ENCODE measurements at regions of chr2 and their contacts with region 1.

Region 1: GRCh38 chr2:12716282-12717190 is at the start of gene TRIB2:
- DNase-seq: peak; percentile 91
- H3K4me3 Mint-ChIP-seq: peak within 1 kb of the TSS; percentile 89
- H3K27ac Mint-ChIP-seq: peak within 1 kb of the TSS; percentile 92
- H3K4me1 Mint-ChIP-seq: peaks cover 46% of the 10 kb centered on the region
- H3K27me3 Mint-ChIP-seq: peaks cover 6% of the 10 kb centered on the region
- total RNA-seq, gene TRIB2: 62.8 to 68.3 TPM

Region 2: DNA sequence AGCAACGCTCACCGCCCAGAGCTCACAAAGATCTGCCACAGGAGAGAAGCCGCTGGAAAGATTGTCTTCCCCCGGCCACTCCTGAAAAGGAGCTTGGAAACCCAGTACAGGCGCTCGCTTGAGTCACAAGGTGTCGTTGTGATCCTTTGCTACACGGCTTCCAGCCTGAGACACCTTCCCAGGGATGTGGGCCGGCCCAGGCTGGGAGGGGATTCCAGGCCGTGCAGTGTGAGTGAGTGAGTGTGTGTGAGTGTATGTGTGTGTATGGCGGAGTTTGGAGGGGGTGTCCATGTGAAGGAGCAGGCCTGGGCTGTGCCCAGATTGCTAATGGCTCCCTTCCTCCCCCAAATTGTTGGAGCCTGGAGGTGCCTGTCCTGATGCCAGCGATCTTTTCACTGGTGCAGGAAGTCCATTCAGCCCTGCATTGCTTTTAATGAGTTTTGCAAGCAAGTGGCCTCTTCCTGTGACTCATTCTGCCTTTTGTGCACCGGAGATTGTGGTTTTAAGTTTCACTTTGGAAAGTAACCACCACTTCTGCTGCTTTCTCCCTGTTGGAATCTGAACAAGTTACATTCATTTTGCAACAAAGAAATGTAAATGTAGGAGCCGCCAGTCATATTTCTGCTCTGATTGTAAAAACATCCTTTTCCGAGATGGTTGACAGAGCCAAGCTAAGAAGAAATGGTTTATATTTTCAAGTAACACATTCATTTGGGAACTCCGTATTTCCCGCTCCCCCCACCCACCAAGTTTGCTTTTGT is 886.4 kb before region 1 on chr2:
- CTCF ChIA-PET with region 1: interaction called, 18 read pairs
- POLR2A ChIA-PET with region 1: interaction called, 7 read pairs
- DNase-seq: peak; percentile 64
- H3K4me3 Mint-ChIP-seq: peak overlapping the region; percentile 52
- H3K27ac Mint-ChIP-seq: peak overlapping the region; percentile 13
- H3K4me1 Mint-ChIP-seq: peaks cover 29% of the 10 kb centered on the region
- H3K27me3 Mint-ChIP-seq: peaks cover 51% of the 10 kb centered on the region

Region 3: DNA sequence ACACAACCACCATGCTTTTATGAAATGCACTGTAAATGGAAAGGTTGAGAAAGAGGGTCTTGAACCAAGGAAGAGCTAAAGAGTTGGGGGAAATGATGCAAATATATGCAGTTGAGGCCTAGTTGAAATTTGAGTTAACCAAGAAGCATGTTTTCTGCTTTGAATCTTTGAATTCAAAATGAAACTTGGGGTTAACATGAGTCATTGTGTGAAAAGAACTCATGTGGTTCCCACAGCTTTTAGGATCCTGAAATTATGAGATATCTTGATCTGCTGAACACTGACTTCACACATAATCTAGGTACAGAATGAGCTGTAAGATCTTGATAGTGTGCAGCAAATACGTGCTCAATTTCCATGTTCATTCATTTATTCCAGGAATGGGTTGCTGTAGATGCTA is 422.7 kb before region 1 on chr2:
- CTCF ChIA-PET with region 1: interaction called, 6 read pairs
- POLR2A ChIA-PET with region 1: interaction called, 14 read pairs
- DNase-seq: no peak
- H3K4me3 Mint-ChIP-seq: no peak overlapping the region
- H3K27ac Mint-ChIP-seq: peak overlapping the region; percentile 79
- H3K4me1 Mint-ChIP-seq: peaks cover 55% of the 10 kb centered on the region
- H3K27me3 Mint-ChIP-seq: peaks cover 15% of the 10 kb centered on the region

Region 4: GRCh38 chr2:12436935-12437561 is 279.5 kb before region 1 on chr2:
- CTCF ChIA-PET with region 1: interaction called, 29 read pairs
- POLR2A ChIA-PET with region 1: interaction called, 19 read pairs
- DNase-seq: no peak
- H3K4me3 Mint-ChIP-seq: no peak overlapping the region
- H3K27ac Mint-ChIP-seq: no peak overlapping the region
- H3K4me1 Mint-ChIP-seq: peaks cover 30% of the 10 kb centered on the region
- H3K27me3 Mint-ChIP-seq: no peaks in the 10 kb centered on the region

Region 5: DNA sequence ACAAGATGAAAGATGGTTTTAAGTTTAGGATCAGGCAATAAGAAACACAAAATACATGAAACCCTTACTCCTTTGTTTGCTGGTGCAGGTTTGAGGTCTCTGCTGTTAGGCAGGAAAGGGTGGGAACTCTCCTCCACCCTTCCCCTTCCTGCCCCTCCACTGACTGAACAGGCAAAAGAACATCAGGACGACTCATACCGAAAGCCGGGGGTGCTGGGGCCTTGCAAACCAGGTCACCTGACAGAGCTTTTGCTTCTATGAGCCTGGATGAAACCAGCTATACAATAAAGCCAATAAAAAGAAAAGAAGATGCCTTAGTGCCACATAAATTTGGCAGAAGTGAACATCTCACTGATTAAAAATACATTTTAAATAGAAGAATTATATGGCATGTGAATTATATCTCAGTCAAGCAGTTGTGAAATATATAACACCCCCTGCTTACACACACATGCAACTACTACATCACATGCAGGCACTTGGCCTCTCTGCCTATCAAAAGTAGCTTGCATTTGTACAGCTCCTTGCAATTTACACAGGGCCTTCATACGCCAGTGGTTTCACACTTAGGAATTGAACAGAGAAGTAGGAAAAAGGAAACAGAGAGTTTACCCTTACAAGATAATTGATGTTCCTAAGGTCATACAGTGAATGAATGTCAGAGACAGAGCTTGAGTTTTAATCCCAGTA is 214.9 kb before region 1 on chr2:
- CTCF ChIA-PET with region 1: interaction called, 52 read pairs
- POLR2A ChIA-PET with region 1: interaction called, 82 read pairs
- DNase-seq: peak; percentile 90
- H3K4me3 Mint-ChIP-seq: peak overlapping the region; percentile 28
- H3K27ac Mint-ChIP-seq: peak overlapping the region; percentile 89
- H3K4me1 Mint-ChIP-seq: peaks cover 96% of the 10 kb centered on the region
- H3K27me3 Mint-ChIP-seq: no peaks in the 10 kb centered on the region

Region 6: GRCh38 chr2:12702305-12703121 is 14.0 kb before region 1 on chr2:
- CTCF ChIA-PET with region 1: interaction called, 11 read pairs
- POLR2A ChIA-PET with region 1: interaction called, 4 read pairs
- DNase-seq: no peak
- H3K4me3 Mint-ChIP-seq: no peak overlapping the region
- H3K27ac Mint-ChIP-seq: no peak overlapping the region
- H3K4me1 Mint-ChIP-seq: peaks cover 24% of the 10 kb centered on the region
- H3K27me3 Mint-ChIP-seq: peaks cover 14% of the 10 kb centered on the region

Region 7: DNA sequence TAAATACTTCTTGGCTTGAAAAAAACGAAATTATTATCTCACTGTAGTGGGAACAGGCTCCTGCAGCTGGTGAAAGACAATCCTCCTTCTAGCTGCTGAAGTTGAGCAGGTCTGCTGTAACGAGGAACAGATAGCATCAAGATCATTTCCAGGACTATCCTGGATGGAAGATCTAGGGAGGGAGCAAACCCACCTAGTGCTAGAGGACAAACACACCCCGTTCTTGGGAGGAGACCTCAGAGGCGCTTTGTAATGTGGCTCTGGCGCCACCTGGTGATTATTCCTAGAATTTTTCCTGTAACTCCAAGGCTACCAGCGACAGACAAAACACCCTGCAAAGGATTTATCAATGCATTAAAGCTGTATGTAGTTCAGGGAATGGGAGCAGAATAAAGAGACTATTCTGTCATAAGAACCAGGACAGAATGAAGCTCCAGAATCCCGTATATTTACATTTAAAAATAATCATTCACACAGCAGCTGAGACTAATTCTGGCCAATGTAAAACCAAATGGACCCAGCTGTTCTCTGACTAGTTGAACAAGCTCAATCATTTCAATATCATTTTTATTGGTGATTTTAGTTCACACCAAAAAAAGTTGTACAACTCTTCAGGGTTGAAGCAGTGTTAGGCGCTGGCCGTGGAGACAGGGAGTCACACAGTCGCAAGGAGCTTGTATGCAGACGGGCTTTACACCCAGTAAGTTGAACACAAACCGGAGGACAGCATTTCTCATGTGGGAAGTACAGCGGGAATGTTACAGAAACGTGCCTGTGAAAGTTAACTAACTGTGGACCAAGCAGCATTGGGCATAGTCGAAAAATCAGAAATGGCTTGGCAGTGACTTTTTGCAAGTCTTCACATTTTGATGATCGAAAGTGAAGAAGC is 290.5 kb after region 1 on chr2:
- CTCF ChIA-PET with region 1: interaction called, 42 read pairs
- POLR2A ChIA-PET with region 1: interaction called, 8 read pairs
- DNase-seq: peak; percentile 68
- H3K4me3 Mint-ChIP-seq: no peak overlapping the region
- H3K27ac Mint-ChIP-seq: no peak overlapping the region
- H3K4me1 Mint-ChIP-seq: peaks cover 2% of the 10 kb centered on the region
- H3K27me3 Mint-ChIP-seq: peaks cover 16% of the 10 kb centered on the region

Measured in activated CD4-positive, alpha-beta memory T cell treated with anti-CD3 and anti-CD28 coated beads, Interleukin-2, amount 10 ng/mL, durations not matched to agents 7 days and 5 days (primary cell).